Panc1 (cell line): ENCODE measurements at regions of chr3 and their contacts with region 1.

Region 1: DNA sequence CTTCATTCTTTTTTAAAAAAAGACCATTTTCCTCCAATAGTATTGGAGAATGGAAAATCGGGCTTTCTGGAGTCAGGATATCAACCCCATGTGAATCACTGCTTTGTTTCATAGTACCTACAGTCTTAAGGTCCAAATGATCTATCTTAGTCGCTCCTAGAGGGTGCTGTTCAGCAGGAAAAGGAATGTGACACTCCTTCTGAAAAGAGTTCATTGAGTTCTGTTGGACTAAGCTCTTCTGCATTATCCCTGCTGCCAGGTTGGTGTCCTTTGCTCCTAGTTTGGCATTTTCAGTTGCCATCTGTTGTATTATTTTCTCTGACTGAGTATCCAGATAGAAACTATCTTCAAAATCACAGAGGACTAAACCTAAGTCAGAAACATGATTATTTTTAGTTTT is 57.2 kb downstream of the POLQ start:
- DNase-seq: no peak
- ATAC-seq: no peak
- H3K4me3 ChIP-seq: no peak overlapping the region
- H3K27ac ChIP-seq: no peak overlapping the region
- H3K4me1 ChIP-seq: no peaks in the 10 kb centered on the region
- H3K27me3 ChIP-seq: no peaks in the 10 kb centered on the region
- CTCF ChIP-seq: no peak; the same call in 1 of the 2 replicates

Region 2: GRCh38 chr3:121152573-121152972 is 336.1 kb before region 1 on chr3:
- CTCF ChIA-PET with region 1: no interaction called
- POLR2A ChIA-PET with region 1: interaction called, 15 read pairs
- in situ Hi-C with region 1: no loop called
- intact Hi-C with region 1: no loop called
- DNase-seq: peak; percentile 2
- ATAC-seq: 0 out of 2 replicates have a peak, but pooled peaks have one; percentile 62
- H3K4me3 ChIP-seq: no peak overlapping the region
- H3K27ac ChIP-seq: no peak overlapping the region
- H3K4me1 ChIP-seq: no peaks in the 10 kb centered on the region
- H3K27me3 ChIP-seq: no peaks in the 10 kb centered on the region
- CTCF ChIP-seq: peak; percentile 26; the same call in 1 of the 2 replicates

Region 3: GRCh38 chr3:122816587-122816986 is 1328.0 kb after region 1 on chr3:
- CTCF ChIA-PET with region 1: interaction called, 12 read pairs
- POLR2A ChIA-PET with region 1: no interaction called
- in situ Hi-C with region 1: no loop called
- intact Hi-C with region 1: no loop called
- DNase-seq: no peak
- ATAC-seq: no peak
- H3K4me3 ChIP-seq: no peak overlapping the region
- H3K27ac ChIP-seq: no peak overlapping the region
- H3K4me1 ChIP-seq: no peaks in the 10 kb centered on the region
- H3K27me3 ChIP-seq: no peaks in the 10 kb centered on the region
- CTCF ChIP-seq: no peak